A549 (cell line): ENCODE measurements at regions of chr11 and their contacts with region 1.

Region 1: DNA sequence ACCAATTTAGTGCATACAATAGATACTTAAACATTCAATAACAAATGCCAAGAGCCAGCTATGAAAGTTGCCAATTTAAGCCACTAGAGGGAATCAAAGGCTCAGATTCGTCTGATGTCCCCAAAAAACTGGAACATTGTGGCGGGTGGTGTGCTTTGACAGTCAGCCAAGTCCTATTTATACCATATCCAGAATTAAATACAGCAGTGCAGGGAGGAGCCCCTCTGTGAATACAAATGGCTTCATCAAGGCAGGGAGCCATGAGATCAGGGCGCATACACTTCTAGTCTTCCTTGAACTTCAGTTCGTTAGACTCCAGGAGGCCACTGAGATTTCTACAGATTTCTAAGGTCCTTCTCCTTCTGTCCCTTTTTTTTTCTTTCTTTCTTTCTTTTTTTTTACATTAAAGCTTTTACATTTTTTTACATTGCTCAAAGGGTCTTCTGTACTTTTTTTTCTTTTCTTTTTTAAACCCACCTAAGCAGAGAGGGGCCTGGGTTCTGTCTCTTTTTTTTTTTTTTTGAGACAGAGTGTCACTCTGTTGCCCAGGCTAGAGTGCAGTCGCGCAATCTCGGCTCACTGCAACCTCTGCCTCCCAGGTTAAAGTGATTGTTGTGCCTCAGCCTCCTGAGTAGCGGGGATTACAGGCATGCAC is 41.5 kb upstream of the HSPA8 start:
- DNase-seq: peak; percentile 26 to 59
- ATAC-seq: peak; percentile 74 to 84; a peak in 5 of 6 replicates
- H3K4me3 ChIP-seq: no peak overlapping the region
- H3K27ac ChIP-seq: no peak overlapping the region
- H3K4me1 ChIP-seq: no peaks in the 10 kb centered on the region; the same call in 1 of the 3 replicates
- CTCF ChIP-seq: peak; percentile 69
- EP300 ChIP-seq: no peak
- POLR2A ChIP-seq: no peak
- RAD21 ChIP-seq: peak; percentile 81 to 83

Region 2: DNA sequence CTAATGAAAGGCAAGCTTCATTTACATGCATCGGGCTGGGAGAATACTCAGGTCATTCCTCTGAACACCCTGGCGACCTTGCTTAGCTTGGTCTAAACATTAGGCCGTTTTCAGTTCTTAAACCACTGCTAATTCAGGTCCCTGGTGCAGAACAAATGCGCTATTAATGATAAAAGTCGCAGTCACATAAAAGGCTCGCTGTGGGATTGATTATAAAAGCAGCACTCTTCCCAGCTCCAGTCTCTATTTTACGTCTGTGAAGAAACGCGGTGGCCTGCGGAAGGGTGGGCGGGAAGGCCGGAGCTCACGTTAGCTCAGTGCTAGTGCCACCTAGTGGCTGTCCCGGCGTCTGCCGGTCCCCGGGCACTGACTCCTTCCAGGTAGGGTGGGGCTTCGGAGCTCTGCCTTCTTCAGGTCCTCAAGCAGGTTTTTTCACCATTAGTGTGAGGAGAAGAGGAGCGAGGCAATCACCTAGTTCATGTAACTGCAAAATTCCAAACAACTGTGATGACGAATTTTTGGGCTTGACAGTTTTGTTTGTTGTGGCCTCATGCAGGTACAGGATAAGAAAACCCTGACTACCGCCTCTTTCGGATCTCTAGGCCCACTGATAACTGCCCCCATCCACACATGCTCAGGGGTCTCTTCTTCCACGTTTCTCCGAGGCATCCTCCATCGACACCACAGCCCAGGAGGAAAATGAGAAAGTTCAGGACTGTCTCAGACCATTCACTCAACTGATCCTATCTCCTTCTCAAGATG is 158.1 kb after region 1 on chr11:
- CTCF ChIA-PET with region 1: interaction called, 50 read pairs
- POLR2A ChIA-PET with region 1: no interaction called
- DNase-seq: peak; percentile 71 to 73
- ATAC-seq: peak; percentile 96 to 99
- H3K4me3 ChIP-seq: peak overlapping the region; percentile 30
- H3K27ac ChIP-seq: peak overlapping the region; percentile 61 to 79; a peak in 4 of 6 replicates
- H3K4me1 ChIP-seq: no peaks in the 10 kb centered on the region
- CTCF ChIP-seq: peak; percentile 82
- EP300 ChIP-seq: no peak
- POLR2A ChIP-seq: no peak
- RAD21 ChIP-seq: peak; percentile 79 to 83